ENCODE measurements at regions of chr6 and their contacts with region 1.

Region 1: GRCh38 chr6:142902636-142903053 is 42.3 kb downstream of the HIVEP2 start:
- DNase-seq: peak; percentile 84
- ATAC-seq: peak; percentile 56
- H3K4me3 Mint-ChIP-seq: peak overlapping the region; percentile 65
- H3K27ac Mint-ChIP-seq: peak overlapping the region; percentile 94
- H3K4me1 Mint-ChIP-seq: peaks cover 64% of the 10 kb centered on the region
- H3K27me3 Mint-ChIP-seq: no peaks in the 10 kb centered on the region

Region 2: GRCh38 chr6:142833054-142833453 is 69.6 kb before region 1 on chr6:
- CTCF ChIA-PET with region 1: no interaction called
- POLR2A ChIA-PET with region 1: no interaction called
- intact Hi-C with region 1: no loop called
- DNase-seq: peak; percentile 65
- ATAC-seq: peak; percentile 89
- H3K4me3 Mint-ChIP-seq: peak overlapping the region; percentile 5
- H3K27ac Mint-ChIP-seq: peak overlapping the region; percentile 81
- H3K4me1 Mint-ChIP-seq: peaks cover 80% of the 10 kb centered on the region
- H3K27me3 Mint-ChIP-seq: no peaks in the 10 kb centered on the region

Region 3: DNA sequence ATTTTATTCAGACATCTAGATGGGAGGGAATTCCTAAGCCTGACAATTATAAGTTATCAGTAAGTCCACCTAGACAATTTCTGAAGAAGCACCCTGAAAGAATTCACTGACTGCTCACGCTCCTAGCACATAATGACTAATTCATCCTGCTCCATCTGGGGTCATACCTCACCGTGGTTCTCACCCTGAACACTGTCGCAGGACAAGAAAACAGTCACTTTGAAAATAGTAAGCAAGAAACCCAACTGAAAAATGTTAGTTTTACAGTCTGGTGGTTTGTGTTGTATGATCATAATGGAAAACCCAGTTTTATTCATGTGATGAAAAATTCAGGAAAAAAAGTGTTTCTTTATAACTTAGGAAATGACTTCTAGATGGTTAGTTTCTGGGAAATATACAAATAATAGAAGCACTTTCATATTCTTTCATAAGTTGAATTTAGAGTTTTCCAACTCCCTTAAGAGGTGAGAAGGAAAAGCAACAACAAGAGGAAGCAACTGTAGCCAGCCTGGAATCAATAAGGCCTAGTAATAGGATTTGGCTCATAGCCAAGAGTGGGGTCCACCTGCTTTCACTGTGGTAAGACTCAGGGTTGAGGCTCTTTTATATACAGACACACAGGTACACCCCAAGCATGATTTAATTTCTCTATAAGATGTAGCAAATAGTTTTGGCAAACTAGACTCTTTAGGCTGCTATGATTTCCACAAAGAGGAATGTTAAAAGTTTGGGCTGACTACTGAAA is 51.8 kb before region 1 on chr6:
- CTCF ChIA-PET with region 1: interaction called, 4 read pairs
- POLR2A ChIA-PET with region 1: interaction called, 3 read pairs
- intact Hi-C with region 1: loop called in 1 of 2 experiments (anchors 2 kb)
- DNase-seq: peak; percentile 66
- ATAC-seq: peak; percentile 67
- H3K4me3 Mint-ChIP-seq: peak overlapping the region; percentile 37
- H3K27ac Mint-ChIP-seq: peak overlapping the region; percentile 86
- H3K4me1 Mint-ChIP-seq: peaks cover 95% of the 10 kb centered on the region
- H3K27me3 Mint-ChIP-seq: no peaks in the 10 kb centered on the region

Region 4: GRCh38 chr6:142960098-142960497 is 57.5 kb after region 1 on chr6:
- CTCF ChIA-PET with region 1: no interaction called
- POLR2A ChIA-PET with region 1: no interaction called
- intact Hi-C with region 1: no loop called
- DNase-seq: no peak
- ATAC-seq: no peak
- H3K4me3 Mint-ChIP-seq: no peak overlapping the region
- H3K27ac Mint-ChIP-seq: no peak overlapping the region
- H3K4me1 Mint-ChIP-seq: no peaks in the 10 kb centered on the region
- H3K27me3 Mint-ChIP-seq: no peaks in the 10 kb centered on the region